Endothelial cell of umbilical vein (primary cell): ENCODE measurements at regions of chr20 and their contacts with region 1.

Region 1: GRCh38 chr20:45436732-45437391 is 20.9 kb downstream of the PIGT start:
- DNase-seq: peak; percentile 85
- H3K4me3 ChIP-seq: peak overlapping the region; percentile 42 to 71 (median 52)
- H3K27ac ChIP-seq: no peak overlapping the region
- H3K4me1 ChIP-seq: peaks cover 6% of the 10 kb centered on the region
- H3K27me3 ChIP-seq: no peaks in the 10 kb centered on the region
- CTCF ChIP-seq: peak; percentile 92 to 96
- POLR2A ChIP-seq: no peak

Region 2: DNA sequence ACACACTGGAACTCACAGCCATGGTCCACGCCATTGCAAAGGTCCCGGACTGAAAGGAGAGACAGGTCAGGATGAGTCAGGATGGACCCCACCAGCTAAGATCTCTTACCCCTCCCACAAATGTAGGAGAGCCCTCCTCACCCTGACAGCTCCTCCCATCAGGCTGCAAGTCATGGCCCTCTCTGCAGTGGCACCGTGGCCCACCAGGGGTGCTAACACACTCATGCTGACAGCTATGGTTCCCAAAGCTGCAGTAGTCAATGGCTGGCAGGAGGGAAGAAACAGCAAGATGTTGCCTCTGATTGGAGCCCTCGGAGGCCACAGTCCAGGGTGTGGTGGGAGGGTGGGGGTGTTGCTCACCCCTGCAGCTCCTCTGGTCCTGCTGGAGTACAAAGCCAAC is 135.9 kb before region 1 on chr20:
- CTCF ChIA-PET with region 1: interaction called, 12 read pairs
- POLR2A ChIA-PET with region 1: no interaction called
- dilution Hi-C with region 1: no loop called
- intact Hi-C with region 1: no loop called
- DNase-seq: peak; percentile 13
- H3K4me3 ChIP-seq: no peak overlapping the region
- H3K27ac ChIP-seq: no peak overlapping the region
- H3K4me1 ChIP-seq: no peaks in the 10 kb centered on the region
- H3K27me3 ChIP-seq: peaks cover 3 to 12% of the 10 kb centered on the region in 2 experiments
- CTCF ChIP-seq: peak; percentile 33 to 58
- POLR2A ChIP-seq: no peak

Region 3: GRCh38 chr20:45337367-45338120 is 99.3 kb before region 1 on chr20:
- CTCF ChIA-PET with region 1: interaction called, 19 read pairs
- POLR2A ChIA-PET with region 1: no interaction called
- dilution Hi-C with region 1: no loop called
- intact Hi-C with region 1: no loop called
- DNase-seq: no peak
- H3K4me3 ChIP-seq: no peak overlapping the region
- H3K27ac ChIP-seq: peak overlapping the region; percentile 12
- H3K4me1 ChIP-seq: peaks cover 27% of the 10 kb centered on the region
- H3K27me3 ChIP-seq: no peaks in the 10 kb centered on the region
- CTCF ChIP-seq: no peak
- POLR2A ChIP-seq: no peak

Region 4: GRCh38 chr20:45373353-45374100 is 63.3 kb before region 1 on chr20:
- CTCF ChIA-PET with region 1: interaction called, 416 read pairs
- POLR2A ChIA-PET with region 1: interaction called, 6 read pairs
- dilution Hi-C with region 1: no loop called
- intact Hi-C with region 1: loop called (anchors 1 kb)
- DNase-seq: peak; percentile 84
- H3K4me3 ChIP-seq: peak overlapping the region; percentile 17 to 48 (median 30)
- H3K27ac ChIP-seq: no peak overlapping the region
- H3K4me1 ChIP-seq: peaks cover 7% of the 10 kb centered on the region
- H3K27me3 ChIP-seq: no peaks in the 10 kb centered on the region
- CTCF ChIP-seq: peak; percentile 85 to 96
- POLR2A ChIP-seq: no peak

Region 5: DNA sequence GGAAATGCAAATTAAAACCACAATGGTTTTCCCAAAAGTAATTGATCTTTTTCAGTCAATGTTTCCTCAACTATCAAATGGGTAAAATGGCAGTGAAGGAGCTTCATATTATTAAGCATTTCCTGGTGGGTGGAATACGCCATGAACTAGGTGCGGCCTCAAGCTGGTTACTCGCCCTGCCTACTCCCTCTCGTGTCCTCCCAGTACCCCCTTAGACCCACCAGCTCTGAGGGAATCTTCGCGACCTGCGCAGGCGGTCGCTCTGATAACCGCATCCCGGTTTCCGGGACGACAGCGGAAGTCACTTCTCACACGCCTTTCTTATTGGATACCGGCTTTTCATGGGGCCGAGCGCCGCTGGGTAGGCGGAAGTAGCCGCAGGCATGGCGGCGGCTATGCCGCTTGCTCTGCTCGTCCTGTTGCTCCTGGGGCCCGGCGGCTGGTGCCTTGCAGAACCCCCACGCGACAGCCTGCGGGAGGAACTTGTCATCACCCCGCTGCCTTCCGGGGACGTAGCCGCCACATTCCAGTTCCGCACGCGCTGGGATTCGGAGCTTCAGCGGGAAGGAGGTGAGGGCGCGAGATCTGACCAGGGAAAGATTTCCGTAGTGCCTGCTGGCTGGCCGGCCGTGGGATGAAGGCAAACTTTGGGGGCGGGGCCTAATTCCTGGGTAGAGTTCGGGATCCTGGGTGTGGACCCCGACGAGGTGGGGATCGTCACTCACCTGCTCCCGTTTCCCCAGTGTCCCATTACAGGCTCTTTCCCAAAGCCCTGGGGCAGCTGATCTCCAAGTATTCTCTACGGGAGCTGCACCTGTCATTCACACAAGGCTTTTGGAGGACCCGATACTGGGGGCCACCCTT is 20.9 kb before region 1 on chr20 and contains the start of gene PIGT:
- CTCF ChIA-PET with region 1: interaction called, 42 read pairs
- POLR2A ChIA-PET with region 1: no interaction called
- dilution Hi-C with region 1: no loop called
- intact Hi-C with region 1: loop called (anchors 1 kb)
- DNase-seq: peak; percentile 87
- H3K4me3 ChIP-seq: peak within 1 kb of the TSS; percentile 43 to 76 (median 70)
- H3K27ac ChIP-seq: peak within 1 kb of the TSS; percentile 64
- H3K4me1 ChIP-seq: peaks cover 21% of the 10 kb centered on the region
- H3K27me3 ChIP-seq: no peaks in the 10 kb centered on the region
- CTCF ChIP-seq: no peak
- POLR2A ChIP-seq: peak; percentile 93
- total RNA-seq, gene PIGT: 92.7 and 96.8 TPM in 2 replicates

Region 6: GRCh38 chr20:45771182-45771759 is 334.4 kb after region 1 on chr20:
- CTCF ChIA-PET with region 1: interaction called, 42 read pairs
- POLR2A ChIA-PET with region 1: interaction called, 3 read pairs
- dilution Hi-C with region 1: no loop called
- intact Hi-C with region 1: loop called (anchors 1 kb)
- DNase-seq: peak; percentile 88
- H3K4me3 ChIP-seq: no peak overlapping the region
- H3K27ac ChIP-seq: no peak overlapping the region
- H3K4me1 ChIP-seq: no peaks in the 10 kb centered on the region
- H3K27me3 ChIP-seq: peaks cover 0 to 4% of the 10 kb centered on the region in 2 experiments
- CTCF ChIP-seq: peak; percentile 85 to 93
- POLR2A ChIP-seq: no peak